B cell (primary cell): ENCODE measurements at regions of chr3 and their contacts with region 1.

Region 1: DNA sequence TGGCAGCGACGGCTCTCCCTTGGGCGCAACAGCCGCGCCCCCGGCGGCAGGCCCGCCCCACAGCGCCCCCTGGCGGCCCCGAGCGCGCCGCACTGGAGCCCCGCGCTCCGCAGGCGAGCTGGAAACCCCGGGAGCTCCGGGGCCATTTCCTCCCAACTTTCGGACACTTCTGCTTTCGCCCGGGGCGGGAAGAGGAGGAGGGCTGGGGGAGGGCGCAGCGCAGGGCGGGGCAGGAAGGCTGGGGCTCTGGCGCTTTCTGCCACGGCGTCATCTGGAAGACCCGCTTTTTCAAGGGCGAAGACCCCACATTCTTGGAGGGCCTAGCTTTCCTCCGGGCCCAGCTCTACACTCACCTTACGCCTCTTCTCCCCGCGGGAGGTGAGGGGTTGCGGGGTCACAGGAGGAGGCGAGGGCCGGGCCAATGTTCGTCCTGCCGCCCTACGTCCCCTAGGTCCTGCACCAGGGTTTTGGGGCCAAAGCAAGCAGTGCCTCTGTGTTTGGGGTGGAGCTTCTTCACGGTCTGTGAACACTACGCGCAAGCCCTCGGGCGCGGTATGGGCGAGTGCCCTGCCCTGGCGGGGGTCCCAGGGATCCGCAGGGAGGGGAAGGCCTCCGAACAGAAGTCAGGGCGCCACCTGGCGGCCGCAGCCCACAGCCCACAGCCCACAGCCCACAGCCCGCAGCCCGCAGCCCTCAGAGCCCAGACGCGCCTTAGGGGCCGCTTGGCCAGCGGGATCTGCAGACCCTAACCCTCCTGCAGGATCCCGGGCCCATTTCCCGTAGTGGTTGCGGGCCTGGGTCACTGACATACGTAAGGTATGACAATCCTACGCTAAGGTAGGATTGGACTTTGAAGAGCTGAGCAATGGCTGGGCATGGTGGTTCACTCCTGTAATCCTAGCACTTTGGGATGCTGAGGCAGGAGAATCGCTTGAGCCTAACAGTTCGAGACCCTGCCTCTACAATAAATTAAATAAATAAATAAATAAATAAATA is 31.1 kb downstream of the FOXL2 start:
- DNase-seq: peak; percentile 88
- ATAC-seq: peak; percentile 84
- H3K4me3 ChIP-seq: peak overlapping the region; percentile 55 to 81 (median 70)
- H3K4me3 Mint-ChIP-seq: peak overlapping the region; percentile 92
- H3K27ac ChIP-seq: peak overlapping the region; percentile 40 to 54
- H3K27ac Mint-ChIP-seq: peak overlapping the region; percentile 83
- H3K4me1 ChIP-seq: peaks cover 3 to 18% of the 10 kb centered on the region in 2 donors
- H3K4me1 Mint-ChIP-seq: peaks cover 13% of the 10 kb centered on the region
- H3K27me3 ChIP-seq: peaks cover 0 to 5% (median 1%) of the 10 kb centered on the region in 4 experiments
- H3K27me3 Mint-ChIP-seq: peaks cover 10% of the 10 kb centered on the region
- CTCF ChIP-seq: peak; percentile 89

Region 2: DNA sequence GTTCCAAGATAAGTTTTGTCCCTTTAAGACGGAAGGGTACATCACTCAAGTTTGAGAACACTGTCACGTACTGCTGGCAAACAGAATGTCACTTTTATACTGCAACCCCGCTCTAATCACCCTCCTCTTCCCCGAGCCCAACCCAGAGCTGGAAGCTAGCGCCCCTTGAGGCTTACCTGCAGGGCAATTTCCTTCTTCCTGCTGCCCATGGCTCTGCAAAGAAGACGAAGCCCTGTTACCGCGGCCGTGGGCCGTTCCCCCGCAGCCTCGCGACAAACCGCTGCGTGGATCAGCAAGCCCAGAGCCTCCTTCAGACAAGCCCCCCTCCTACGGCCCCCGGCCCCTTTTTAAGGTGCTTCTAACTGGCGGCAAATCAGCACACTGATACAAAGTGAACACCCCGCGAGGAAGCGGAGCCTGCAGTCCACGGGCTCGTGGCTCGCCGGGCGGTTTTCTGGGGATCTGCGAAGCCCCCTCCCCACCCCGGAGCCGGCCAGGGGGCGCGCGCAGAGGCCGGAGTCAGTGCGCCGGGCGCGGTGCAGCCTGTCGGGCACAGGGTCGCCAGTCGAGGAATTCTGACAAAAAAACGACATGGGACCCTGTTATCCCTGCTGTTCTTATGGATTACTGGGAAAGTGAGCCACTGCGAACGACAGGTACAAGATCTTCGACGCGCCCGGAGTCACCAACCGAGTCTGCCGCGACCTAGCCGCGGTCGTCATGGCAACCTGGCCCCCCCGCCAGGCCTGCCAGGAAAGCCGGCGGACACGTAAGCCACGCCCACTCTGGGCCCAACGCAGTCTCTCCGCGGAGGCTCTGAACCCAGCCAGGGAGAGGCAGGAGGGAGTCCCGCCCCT is 586.4 kb before region 1 on chr3 and contains the start of gene NME9:
- CTCF ChIA-PET with region 1: interaction called, 4 read pairs
- POLR2A ChIA-PET with region 1: no interaction called
- intact Hi-C with region 1: loop called (anchors 5 kb)
- DNase-seq: peak; percentile 84
- ATAC-seq: peak; percentile 92
- H3K4me3 ChIP-seq: peak within 1 kb of the TSS; percentile 22 to 73 (median 60)
- H3K4me3 Mint-ChIP-seq: peak within 1 kb of the TSS; percentile 93
- H3K27ac ChIP-seq: peak within 1 kb of the TSS in 1 of 2 donors; percentile 49
- H3K27ac Mint-ChIP-seq: peak within 1 kb of the TSS; percentile 62
- H3K4me1 ChIP-seq: peaks cover 7 to 18% of the 10 kb centered on the region in 2 donors
- H3K4me1 Mint-ChIP-seq: peaks cover 13% of the 10 kb centered on the region
- H3K27me3 ChIP-seq: peaks cover 0 to 15% (median 9%) of the 10 kb centered on the region in 4 experiments
- H3K27me3 Mint-ChIP-seq: peaks cover 40% of the 10 kb centered on the region
- CTCF ChIP-seq: peak; percentile 61
- total RNA-seq, gene NME9: not detected in 2 replicates

Region 3: GRCh38 chr3:138569090-138569489 is 346.7 kb before region 1 on chr3:
- CTCF ChIA-PET with region 1: interaction called, 17 read pairs
- POLR2A ChIA-PET with region 1: no interaction called
- intact Hi-C with region 1: no loop called
- DNase-seq: no peak
- ATAC-seq: no peak
- H3K4me3 ChIP-seq: no peak overlapping the region
- H3K4me3 Mint-ChIP-seq: no peak overlapping the region
- H3K27ac ChIP-seq: no peak overlapping the region
- H3K27ac Mint-ChIP-seq: no peak overlapping the region
- H3K4me1 ChIP-seq: no peaks in the 10 kb centered on the region
- H3K4me1 Mint-ChIP-seq: peaks cover 2% of the 10 kb centered on the region
- H3K27me3 ChIP-seq: no peaks in the 10 kb centered on the region
- H3K27me3 Mint-ChIP-seq: peaks cover 4% of the 10 kb centered on the region
- CTCF ChIP-seq: no peak

Region 4: DNA sequence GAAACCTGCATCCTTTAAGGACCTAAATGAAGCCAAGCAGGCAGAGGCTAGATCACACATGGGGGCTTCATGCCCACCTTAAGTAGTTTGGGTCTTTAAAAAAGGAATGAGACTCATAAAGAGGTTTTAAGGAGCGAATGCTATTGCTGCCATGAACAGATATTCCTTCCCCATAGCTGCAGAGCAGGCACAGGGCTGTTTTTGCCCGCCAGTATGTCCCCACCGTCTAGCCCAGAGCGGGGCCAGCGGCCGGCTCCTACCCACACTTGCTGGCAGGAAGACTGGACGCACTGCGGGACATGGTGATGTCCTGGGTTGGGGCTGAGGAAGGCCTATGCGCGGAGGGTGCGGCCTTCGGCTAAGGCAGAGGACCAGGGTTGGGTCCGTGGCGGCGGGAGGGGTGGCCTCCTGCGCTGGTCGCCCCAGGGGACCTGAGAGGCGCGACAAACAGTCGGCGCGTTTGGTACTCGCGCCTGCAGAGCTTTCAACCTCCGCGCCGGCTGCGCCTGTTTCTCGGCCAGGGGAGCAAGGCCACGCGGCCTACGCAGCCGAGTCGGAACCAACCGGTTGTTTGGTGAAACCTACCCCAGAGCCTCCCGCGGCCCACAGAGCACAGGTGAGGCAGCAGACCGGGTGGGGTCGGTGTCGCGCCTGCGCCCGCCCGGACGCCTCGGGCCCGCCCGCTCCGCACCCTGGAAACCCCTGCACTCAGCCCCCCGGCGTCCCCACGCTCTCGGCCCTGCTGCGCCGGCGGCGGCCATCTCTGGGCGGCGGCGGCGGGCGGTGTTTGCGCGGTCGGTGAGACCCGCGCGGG is 307.3 kb before region 1 on chr3 and contains the start of gene FAIM:
- CTCF ChIA-PET with region 1: interaction called, 31 read pairs
- POLR2A ChIA-PET with region 1: interaction called, 3 read pairs
- intact Hi-C with region 1: no loop called
- DNase-seq: peak; percentile 85
- ATAC-seq: peak; percentile 74
- H3K4me3 ChIP-seq: peak within 1 kb of the TSS; percentile 57 to 83 (median 71)
- H3K4me3 Mint-ChIP-seq: peak within 1 kb of the TSS; percentile 87
- H3K27ac ChIP-seq: peak within 1 kb of the TSS; percentile 60 to 84
- H3K27ac Mint-ChIP-seq: peak within 1 kb of the TSS; percentile 93
- H3K4me1 ChIP-seq: peaks cover 12 to 14% of the 10 kb centered on the region in 2 donors
- H3K4me1 Mint-ChIP-seq: peaks cover 15% of the 10 kb centered on the region
- H3K27me3 ChIP-seq: no peaks in the 10 kb centered on the region
- H3K27me3 Mint-ChIP-seq: no peaks in the 10 kb centered on the region
- CTCF ChIP-seq: no peak
- total RNA-seq, gene FAIM: 13.8 and 16.3 TPM in 2 replicates

Region 5: GRCh38 chr3:138834359-138835212 is 81.2 kb before region 1 on chr3 and contains the start of gene PIK3CB:
- CTCF ChIA-PET with region 1: interaction called, 17 read pairs
- POLR2A ChIA-PET with region 1: interaction called, 3 read pairs
- intact Hi-C with region 1: loop called (anchors 1 kb)
- DNase-seq: peak; percentile 89
- ATAC-seq: peak; percentile 95
- H3K4me3 ChIP-seq: peak within 1 kb of the TSS; percentile 67 to 88 (median 78)
- H3K4me3 Mint-ChIP-seq: peak within 1 kb of the TSS; percentile 92
- H3K27ac ChIP-seq: peak within 1 kb of the TSS; percentile 46 to 84
- H3K27ac Mint-ChIP-seq: peak within 1 kb of the TSS; percentile 95
- H3K4me1 ChIP-seq: peaks cover 14 to 18% of the 10 kb centered on the region in 2 donors
- H3K4me1 Mint-ChIP-seq: peaks cover 23% of the 10 kb centered on the region
- H3K27me3 ChIP-seq: no peaks in the 10 kb centered on the region
- H3K27me3 Mint-ChIP-seq: no peaks in the 10 kb centered on the region
- CTCF ChIP-seq: peak; percentile 31
- total RNA-seq, gene PIK3CB: 29.4 and 35.1 TPM in 2 replicates

Region 6: DNA sequence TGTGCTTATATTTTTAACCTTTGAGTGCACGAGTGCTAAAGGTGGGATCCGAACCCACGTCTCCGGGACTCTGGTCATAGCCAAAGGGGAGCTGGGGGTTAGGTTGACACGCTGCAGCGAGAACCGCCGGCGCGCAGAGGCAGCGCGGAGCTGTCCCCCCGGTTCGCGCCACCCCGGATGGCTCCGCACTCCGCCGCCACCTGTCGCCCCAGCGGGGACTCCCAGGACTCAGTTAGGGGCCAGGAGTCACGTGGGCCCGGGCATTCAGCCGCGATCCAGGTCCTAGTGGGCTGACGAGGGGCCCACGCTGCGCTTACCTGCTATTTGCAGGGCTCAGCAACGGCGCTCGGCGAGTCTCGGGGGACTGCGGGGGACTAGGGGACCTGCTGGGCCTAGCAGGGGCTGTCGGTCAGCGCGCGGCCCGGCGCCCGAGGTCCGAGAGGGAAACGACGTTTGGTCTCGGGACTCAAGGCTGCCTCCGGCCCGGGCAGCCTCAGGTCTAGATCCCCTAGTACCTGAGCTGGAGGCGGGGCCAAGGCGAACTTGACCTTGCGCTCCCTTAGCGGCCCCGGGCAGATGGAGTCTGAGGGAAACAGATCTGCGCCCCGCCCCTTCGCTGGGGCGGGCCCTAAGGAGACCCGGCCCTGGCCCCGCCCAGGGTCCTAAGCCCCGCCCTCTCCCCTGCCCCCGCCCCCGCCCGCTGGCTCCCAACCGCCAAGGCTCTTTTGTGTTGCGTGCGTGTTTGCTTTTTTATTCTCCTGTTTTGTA is 761.8 kb after region 1 on chr3 and contains the start of gene NMNAT3:
- CTCF ChIA-PET with region 1: no interaction called
- POLR2A ChIA-PET with region 1: no interaction called
- intact Hi-C with region 1: loop called (anchors 10 kb)
- DNase-seq: peak; percentile 87
- ATAC-seq: peak; percentile 99
- H3K4me3 ChIP-seq: peak within 1 kb of the TSS; percentile 5 to 85 (median 80)
- H3K4me3 Mint-ChIP-seq: peak within 1 kb of the TSS; percentile 85
- H3K27ac ChIP-seq: peak within 1 kb of the TSS; percentile 69 to 92
- H3K27ac Mint-ChIP-seq: no peak within 1 kb of the TSS
- H3K4me1 ChIP-seq: peaks cover 4 to 12% of the 10 kb centered on the region in 2 donors
- H3K4me1 Mint-ChIP-seq: peaks cover 9% of the 10 kb centered on the region
- H3K27me3 ChIP-seq: peaks cover 0 to 5% (median 2%) of the 10 kb centered on the region in 4 experiments
- H3K27me3 Mint-ChIP-seq: peaks cover 17% of the 10 kb centered on the region
- CTCF ChIP-seq: no peak
- total RNA-seq, gene NMNAT3: 2.7 and 3.3 TPM in 2 replicates